HAP-1 (cell line): ENCODE measurements at regions of chr1 and their contacts with region 1.

Region 1: GRCh38 chr1:66262211-66262963 is 271.6 kb upstream of the SGIP1 start:
- DNase-seq: peak in 1 of 2 experiments; percentile 31
- H3K4me3 ChIP-seq: no peak overlapping the region
- H3K4me1 ChIP-seq: peaks cover 15% of the 10 kb centered on the region
- H3K27me3 ChIP-seq: no peaks in the 10 kb centered on the region

Region 2: DNA sequence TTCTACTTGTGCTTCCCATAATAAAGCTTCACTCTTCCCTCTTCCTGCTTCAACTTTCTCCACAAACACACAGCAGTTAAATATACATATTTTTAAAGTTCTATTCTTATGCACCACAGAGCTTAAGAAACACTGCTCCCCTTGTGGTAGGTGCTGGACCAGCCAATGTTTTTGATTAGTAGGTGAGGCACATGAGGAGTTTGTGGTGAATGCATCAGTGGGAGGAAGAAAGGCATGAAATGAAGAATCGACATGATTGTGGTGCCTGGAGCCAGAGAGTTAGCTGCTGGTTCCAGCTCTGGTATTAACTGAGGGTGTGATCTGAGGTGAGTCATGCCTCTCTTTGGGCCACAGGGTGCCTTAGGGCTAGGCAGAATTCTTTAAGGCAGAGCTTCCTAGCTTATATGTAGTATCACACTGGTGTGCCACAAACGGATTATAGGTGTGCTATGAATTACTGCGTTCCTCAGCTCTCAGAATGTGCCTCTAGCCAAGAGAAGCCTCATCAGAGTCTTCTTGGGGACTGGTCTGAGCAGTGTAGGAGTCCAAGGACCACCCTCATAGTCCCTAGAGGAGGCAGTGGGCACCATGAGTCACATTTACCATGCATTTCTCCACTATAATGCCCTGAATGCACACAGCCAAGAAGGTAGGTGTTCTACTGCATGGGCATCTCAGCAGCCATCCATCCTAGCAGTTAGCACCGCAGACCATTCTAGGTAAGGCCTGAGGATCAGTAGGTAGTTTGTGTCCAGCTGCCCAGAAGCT is 174.2 kb after region 1 on chr1:
- in situ Hi-C with region 1: loop called (anchors 5 kb)
- DNase-seq: peak; percentile 48 to 70
- H3K4me3 ChIP-seq: no peak overlapping the region
- H3K4me1 ChIP-seq: peaks cover 6% of the 10 kb centered on the region; the same call in 1 of the 2 replicates
- H3K27me3 ChIP-seq: no peaks in the 10 kb centered on the region

Region 3: GRCh38 chr1:66954208-66954607 is 691.8 kb after region 1 on chr1:
- in situ Hi-C with region 1: no loop called
- DNase-seq: no peak
- H3K4me3 ChIP-seq: no peak overlapping the region
- H3K4me1 ChIP-seq: no peaks in the 10 kb centered on the region
- H3K27me3 ChIP-seq: no peaks in the 10 kb centered on the region